Activated B cell treated with CpG ODN at 0.5 μM for 24 hours (primary cell): ENCODE measurements at regions of chr12 and their contacts with region 1.

Region 1: DNA sequence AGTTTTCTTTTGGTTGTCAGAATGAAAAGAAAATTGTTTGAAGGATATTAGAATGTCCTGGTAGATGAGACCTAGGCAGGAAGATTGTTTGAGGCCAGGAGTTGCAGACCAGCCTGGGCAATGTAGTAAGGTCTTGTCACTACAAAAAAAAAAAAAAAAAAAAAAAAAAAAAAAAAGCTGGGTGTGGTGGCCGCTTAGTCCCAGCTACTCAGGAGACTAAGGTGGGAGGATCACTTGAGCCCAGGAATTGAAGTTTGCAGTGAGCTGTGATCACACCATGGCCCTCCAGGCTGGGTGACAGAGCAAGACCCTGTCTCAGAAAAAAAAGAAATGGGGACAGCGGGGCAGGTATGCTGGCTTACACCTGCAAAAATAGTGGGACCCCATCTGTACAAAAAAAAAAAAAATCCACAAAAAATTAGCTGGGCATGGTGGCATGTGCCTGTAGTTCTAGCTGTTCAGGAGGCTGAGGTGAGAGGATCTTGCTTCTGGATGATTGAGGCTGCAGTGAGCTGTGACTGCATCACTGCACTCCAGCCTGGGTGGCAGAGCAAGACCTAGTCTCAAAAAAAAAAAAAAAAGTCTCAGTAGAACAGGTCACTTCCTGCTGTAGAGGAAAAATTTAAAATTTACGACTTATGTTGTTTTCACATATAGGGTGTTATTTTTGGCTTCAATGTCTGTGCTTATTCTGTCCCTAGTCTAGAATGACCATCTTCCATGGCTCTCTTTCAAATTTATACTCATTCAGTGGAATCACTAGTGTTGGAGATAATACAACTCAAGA is 70.7 kb downstream of the PPHLN1 start:
- DNase-seq: no peak
- ATAC-seq: peak; percentile 62
- H3K4me3 Mint-ChIP-seq: no peak overlapping the region
- H3K27ac Mint-ChIP-seq: peak overlapping the region; percentile 41
- H3K4me1 Mint-ChIP-seq: peaks cover 20% of the 10 kb centered on the region
- H3K27me3 Mint-ChIP-seq: no peaks in the 10 kb centered on the region
- CTCF ChIP-seq: no peak

Region 2: GRCh38 chr12:42382013-42382680 is 14.5 kb before region 1 on chr12:
- CTCF ChIA-PET with region 1: no interaction called
- POLR2A ChIA-PET with region 1: no interaction called
- intact Hi-C with region 1: loop called (anchors 2 kb)
- DNase-seq: no peak
- ATAC-seq: no peak
- H3K4me3 Mint-ChIP-seq: no peak overlapping the region
- H3K27ac Mint-ChIP-seq: no peak overlapping the region
- H3K4me1 Mint-ChIP-seq: peaks cover 19% of the 10 kb centered on the region
- H3K27me3 Mint-ChIP-seq: no peaks in the 10 kb centered on the region
- CTCF ChIP-seq: no peak

Region 3: GRCh38 chr12:42407306-42407705 is 10.6 kb after region 1 on chr12:
- CTCF ChIA-PET with region 1: no interaction called
- POLR2A ChIA-PET with region 1: no interaction called
- intact Hi-C with region 1: loop called (anchors 2 kb)
- DNase-seq: no peak
- ATAC-seq: no peak
- H3K4me3 Mint-ChIP-seq: no peak overlapping the region
- H3K27ac Mint-ChIP-seq: no peak overlapping the region
- H3K4me1 Mint-ChIP-seq: peaks cover 14% of the 10 kb centered on the region
- H3K27me3 Mint-ChIP-seq: no peaks in the 10 kb centered on the region
- CTCF ChIP-seq: no peak

Region 4: GRCh38 chr12:42421844-42422779 is 25.4 kb after region 1 on chr12:
- CTCF ChIA-PET with region 1: no interaction called
- POLR2A ChIA-PET with region 1: no interaction called
- intact Hi-C with region 1: no loop called
- DNase-seq: no peak
- ATAC-seq: no peak
- H3K4me3 Mint-ChIP-seq: no peak overlapping the region
- H3K27ac Mint-ChIP-seq: no peak overlapping the region
- H3K4me1 Mint-ChIP-seq: peaks cover 27% of the 10 kb centered on the region
- H3K27me3 Mint-ChIP-seq: no peaks in the 10 kb centered on the region
- CTCF ChIP-seq: no peak